AG04450 (cell line): ENCODE measurements at regions of chr3 and their contacts with region 1.

Region 1: DNA sequence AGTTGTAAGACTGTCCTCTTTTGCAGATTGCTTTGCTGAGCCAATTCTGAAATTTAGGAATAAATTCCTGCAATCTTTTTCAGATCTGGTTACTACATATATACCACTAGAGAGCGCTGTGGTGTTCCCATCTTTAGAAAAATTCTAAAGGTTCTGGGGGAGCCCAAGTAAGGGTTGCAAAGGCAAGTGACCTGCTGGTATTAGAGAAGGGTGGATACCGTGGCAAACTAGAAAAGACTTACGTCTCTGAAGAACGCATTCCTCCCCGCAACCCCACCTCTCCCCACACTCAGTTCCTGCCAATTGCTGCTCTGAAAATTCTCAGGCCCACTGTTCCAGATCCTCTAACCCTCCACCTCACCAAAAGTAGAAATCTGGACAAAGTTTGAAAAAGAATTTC is 48.5 kb downstream of the EFHB start:
- DNase-seq: no peak
- H3K4me3 ChIP-seq: no peak overlapping the region
- H3K27ac ChIP-seq: no peak overlapping the region
- H3K27me3 ChIP-seq: no peaks in the 10 kb centered on the region
- CTCF ChIP-seq: peak; percentile 61

Region 2: GRCh38 chr3:19866751-19867347 is 18.6 kb before region 1 on chr3:
- CTCF ChIA-PET with region 1: interaction called, 58 read pairs
- POLR2A ChIA-PET with region 1: no interaction called
- DNase-seq: no peak
- H3K4me3 ChIP-seq: no peak overlapping the region
- H3K27ac ChIP-seq: no peak overlapping the region
- H3K27me3 ChIP-seq: no peaks in the 10 kb centered on the region
- CTCF ChIP-seq: peak; percentile 84

Region 3: GRCh38 chr3:19898721-19899120 is 13.3 kb after region 1 on chr3:
- CTCF ChIA-PET with region 1: interaction called, 14 read pairs
- POLR2A ChIA-PET with region 1: interaction called, 10 read pairs
- DNase-seq: no peak
- H3K4me3 ChIP-seq: no peak overlapping the region
- H3K27ac ChIP-seq: no peak overlapping the region
- H3K27me3 ChIP-seq: no peaks in the 10 kb centered on the region
- CTCF ChIP-seq: no peak

Region 4: GRCh38 chr3:19940638-19941037 is 55.2 kb after region 1 on chr3:
- CTCF ChIA-PET with region 1: no interaction called
- POLR2A ChIA-PET with region 1: no interaction called
- DNase-seq: no peak
- H3K4me3 ChIP-seq: no peak overlapping the region
- H3K27ac ChIP-seq: no peak overlapping the region
- H3K27me3 ChIP-seq: no peaks in the 10 kb centered on the region
- CTCF ChIP-seq: no peak

Region 5: GRCh38 chr3:20111836-20112235 is 226.4 kb after region 1 on chr3:
- CTCF ChIA-PET with region 1: interaction called, 11 read pairs
- POLR2A ChIA-PET with region 1: no interaction called
- DNase-seq: no peak
- H3K4me3 ChIP-seq: no peak overlapping the region
- H3K27ac ChIP-seq: no peak overlapping the region
- H3K27me3 ChIP-seq: no peaks in the 10 kb centered on the region
- CTCF ChIP-seq: no peak

Region 6: DNA sequence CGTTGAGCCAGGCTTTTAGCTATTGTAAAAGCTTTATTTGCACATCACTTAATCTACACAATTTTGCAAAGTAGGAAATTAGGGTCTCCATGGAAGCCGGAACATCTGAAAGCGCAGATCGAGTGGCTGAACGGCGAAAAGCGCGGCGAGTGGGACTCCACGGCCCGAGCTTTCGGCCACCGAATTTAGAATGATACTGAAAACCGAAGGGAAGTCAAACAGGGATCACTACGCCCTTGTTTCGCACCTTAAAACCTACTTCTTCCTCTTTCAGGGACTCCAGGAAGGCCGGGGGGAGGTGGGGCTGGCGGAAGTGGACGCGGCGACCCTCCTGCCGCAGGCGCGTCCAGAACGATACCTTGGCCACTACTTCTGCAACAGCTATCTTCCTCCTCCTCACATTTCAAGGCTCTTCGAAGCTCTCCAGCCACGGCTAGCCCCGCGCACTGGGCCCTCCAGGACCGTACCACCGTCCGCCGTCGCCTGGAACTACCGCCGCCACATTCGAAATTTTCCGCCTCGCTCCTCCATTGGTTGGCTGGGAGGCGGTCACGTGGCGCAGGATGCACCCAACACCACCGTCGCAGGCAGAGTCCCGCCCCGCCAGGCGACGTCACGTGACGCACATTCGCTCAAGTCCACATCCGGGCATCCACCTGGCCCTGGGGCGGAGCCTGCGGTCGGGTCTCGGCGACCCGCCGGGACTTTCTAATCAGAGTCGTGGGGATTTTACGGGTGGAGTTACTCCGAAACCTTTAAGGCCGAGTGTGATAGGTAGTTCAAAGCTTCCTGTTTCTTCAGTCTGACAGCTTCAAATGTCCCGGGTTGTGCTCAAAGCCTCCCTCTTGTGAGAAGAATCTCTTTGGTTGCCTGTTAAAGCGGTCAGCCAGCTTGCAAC is 300.5 kb after region 1 on chr3 and contains the start of gene SGO1:
- CTCF ChIA-PET with region 1: interaction called, 12 read pairs
- POLR2A ChIA-PET with region 1: no interaction called
- DNase-seq: peak; percentile 90
- H3K4me3 ChIP-seq: peak within 1 kb of the TSS; percentile 97
- H3K27ac ChIP-seq: peak within 1 kb of the TSS; percentile 92
- H3K27me3 ChIP-seq: no peaks in the 10 kb centered on the region
- CTCF ChIP-seq: 0 out of 2 replicates have a peak, but pooled peaks have one; percentile 13
- polyA plus RNA-seq, gene SGO1: 1.3 and 2.2 TPM in 2 replicates